Activated naive CD4-positive, alpha-beta T cell treated with anti-CD3 and anti-CD28 coated beads for 36 hours (primary cell): ENCODE measurements at regions of chr6 and their contacts with region 1.

Region 1: DNA sequence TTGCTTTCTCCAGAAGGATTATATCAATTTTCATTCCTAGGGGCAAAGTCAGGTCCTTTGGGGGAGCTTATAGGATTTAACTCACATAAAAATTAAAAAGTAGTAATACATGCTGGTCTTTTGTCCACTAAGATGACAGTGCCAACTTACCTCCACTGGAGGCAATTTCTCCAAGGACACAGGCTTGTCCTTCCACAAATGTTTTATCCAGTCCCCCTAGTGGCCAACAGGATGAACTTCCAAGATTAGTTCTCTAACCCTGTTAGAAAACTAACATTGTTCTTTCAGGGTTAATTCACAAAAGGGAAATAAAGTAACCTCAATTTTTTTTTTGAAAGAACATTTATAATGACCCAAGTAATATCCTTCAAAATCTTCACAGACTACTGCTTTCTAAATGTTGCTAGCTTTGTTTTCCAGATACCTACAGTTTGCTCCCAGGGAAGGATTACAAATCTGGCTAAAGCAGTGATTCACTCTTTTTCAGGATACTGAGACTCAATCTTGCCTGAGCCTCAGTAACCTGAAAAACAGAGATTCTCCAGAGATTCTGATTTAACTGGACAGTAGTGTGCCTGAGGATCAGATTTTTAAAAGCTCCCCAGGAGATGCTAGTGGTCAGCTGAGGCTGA is 31.7 kb upstream of the UBR2 start:
- DNase-seq: peak; percentile 33
- H3K4me3 Mint-ChIP-seq: no peak overlapping the region
- H3K27ac Mint-ChIP-seq: no peak overlapping the region
- H3K4me1 Mint-ChIP-seq: no peaks in the 10 kb centered on the region
- H3K27me3 Mint-ChIP-seq: no peaks in the 10 kb centered on the region

Region 2: GRCh38 chr6:42260972-42261371 is 271.2 kb before region 1 on chr6:
- CTCF ChIA-PET with region 1: interaction called, 13 read pairs
- intact Hi-C with region 1: loop called (anchors 5 kb)
- DNase-seq: peak; percentile 53
- H3K4me3 Mint-ChIP-seq: no peak overlapping the region
- H3K27ac Mint-ChIP-seq: no peak overlapping the region
- H3K4me1 Mint-ChIP-seq: no peaks in the 10 kb centered on the region
- H3K27me3 Mint-ChIP-seq: no peaks in the 10 kb centered on the region

Region 3: GRCh38 chr6:42511803-42512422 is 20.2 kb before region 1 on chr6:
- CTCF ChIA-PET with region 1: interaction called, 13 read pairs
- intact Hi-C with region 1: no loop called
- DNase-seq: no peak
- H3K4me3 Mint-ChIP-seq: no peak overlapping the region
- H3K27ac Mint-ChIP-seq: no peak overlapping the region
- H3K4me1 Mint-ChIP-seq: peaks cover 11% of the 10 kb centered on the region
- H3K27me3 Mint-ChIP-seq: no peaks in the 10 kb centered on the region

Region 4: DNA sequence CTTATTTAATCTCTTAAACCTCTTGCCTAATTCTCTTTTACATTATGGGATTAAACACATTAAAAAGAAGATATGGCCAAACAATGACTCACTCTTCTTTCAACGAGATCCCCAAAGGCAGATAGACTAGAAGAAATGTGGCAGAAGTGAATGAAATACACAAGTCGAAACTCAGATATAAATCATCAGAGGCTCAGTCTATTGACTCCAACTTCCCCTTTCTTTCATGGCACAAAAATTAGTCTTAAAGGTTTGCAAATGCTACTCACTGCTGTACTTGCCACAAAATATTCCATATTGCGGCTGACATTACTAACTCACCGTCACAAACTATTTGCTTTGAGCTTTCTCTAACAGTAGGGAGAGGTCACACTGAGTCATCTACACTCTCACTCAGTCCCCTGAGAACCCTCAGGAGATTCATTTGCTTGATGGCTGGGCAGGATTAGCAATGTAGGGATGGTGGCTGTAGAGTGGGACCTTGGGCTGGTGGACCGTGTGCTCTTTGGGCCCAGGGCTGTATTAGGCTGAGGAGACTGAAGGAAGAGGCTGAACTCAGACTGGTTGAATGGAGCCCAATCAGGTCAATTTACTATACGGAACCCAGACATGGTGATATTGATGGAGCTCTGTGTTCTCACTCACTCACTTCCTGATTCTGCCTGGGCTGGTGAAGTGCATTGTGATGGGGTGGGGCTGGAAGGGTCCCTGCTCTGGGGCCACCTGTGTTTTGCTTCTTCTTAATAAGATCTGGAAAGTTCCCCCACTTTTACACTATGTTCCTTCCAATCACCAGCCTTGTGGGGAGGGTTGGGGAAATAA is 11.2 kb before region 1 on chr6:
- CTCF ChIA-PET with region 1: interaction called, 14 read pairs
- intact Hi-C with region 1: no loop called
- DNase-seq: peak; percentile 56
- H3K4me3 Mint-ChIP-seq: no peak overlapping the region
- H3K27ac Mint-ChIP-seq: peak overlapping the region; percentile 38
- H3K4me1 Mint-ChIP-seq: peaks cover 18% of the 10 kb centered on the region
- H3K27me3 Mint-ChIP-seq: no peaks in the 10 kb centered on the region

Region 5: GRCh38 chr6:42704241-42704936 is 172.2 kb after region 1 on chr6:
- CTCF ChIA-PET with region 1: no interaction called
- intact Hi-C with region 1: no loop called
- DNase-seq: no peak
- H3K4me3 Mint-ChIP-seq: no peak overlapping the region
- H3K27ac Mint-ChIP-seq: no peak overlapping the region
- H3K4me1 Mint-ChIP-seq: no peaks in the 10 kb centered on the region
- H3K27me3 Mint-ChIP-seq: no peaks in the 10 kb centered on the region

Region 6: DNA sequence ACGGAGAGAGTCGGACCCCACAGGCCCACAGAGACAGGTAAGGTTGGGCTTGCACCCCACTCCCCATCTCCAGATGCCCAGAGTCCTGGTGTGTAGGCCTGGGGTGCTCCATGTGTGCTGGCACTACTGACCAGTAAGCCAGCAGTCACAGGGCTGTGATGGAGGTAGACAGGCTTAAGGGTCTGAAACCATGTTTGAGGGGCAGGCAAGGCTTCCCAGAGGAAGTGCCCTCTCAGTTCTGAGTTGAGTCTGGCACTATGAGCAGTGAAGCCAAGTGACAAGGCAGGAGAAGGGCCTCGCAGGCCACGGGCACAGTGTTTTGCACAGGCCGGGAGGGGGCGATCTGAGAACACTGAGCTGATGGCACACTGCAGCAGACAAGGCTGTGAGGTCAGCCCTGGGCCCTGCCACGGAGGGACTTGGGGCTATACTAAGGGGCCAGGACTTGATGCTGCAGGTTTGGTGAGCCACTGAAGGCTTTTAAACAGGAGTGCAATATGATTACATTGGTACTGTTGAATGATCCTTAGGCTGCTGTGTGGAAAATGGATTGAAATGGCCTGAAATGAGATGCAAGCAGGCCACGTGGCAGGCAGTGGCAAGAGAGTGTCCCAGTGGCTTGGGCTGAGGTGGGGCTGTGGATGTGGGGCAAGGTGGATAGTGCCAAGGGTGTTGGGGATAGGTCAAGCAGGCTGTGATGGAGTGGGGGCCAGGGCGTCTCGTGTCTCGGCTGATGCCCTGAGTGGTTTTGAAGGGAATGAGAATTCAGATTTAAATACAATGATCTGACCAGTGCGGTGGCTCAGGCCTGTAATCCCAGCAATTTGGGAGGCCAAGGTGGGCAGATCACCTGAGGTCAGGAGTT is 731.4 kb after region 1 on chr6:
- CTCF ChIA-PET with region 1: no interaction called
- intact Hi-C with region 1: no loop called
- DNase-seq: peak; percentile 88
- H3K4me3 Mint-ChIP-seq: no peak overlapping the region
- H3K27ac Mint-ChIP-seq: no peak overlapping the region
- H3K4me1 Mint-ChIP-seq: no peaks in the 10 kb centered on the region
- H3K27me3 Mint-ChIP-seq: no peaks in the 10 kb centered on the region